ENCODE measurements at regions of chr6 and their contacts with region 1.

Region 1: DNA sequence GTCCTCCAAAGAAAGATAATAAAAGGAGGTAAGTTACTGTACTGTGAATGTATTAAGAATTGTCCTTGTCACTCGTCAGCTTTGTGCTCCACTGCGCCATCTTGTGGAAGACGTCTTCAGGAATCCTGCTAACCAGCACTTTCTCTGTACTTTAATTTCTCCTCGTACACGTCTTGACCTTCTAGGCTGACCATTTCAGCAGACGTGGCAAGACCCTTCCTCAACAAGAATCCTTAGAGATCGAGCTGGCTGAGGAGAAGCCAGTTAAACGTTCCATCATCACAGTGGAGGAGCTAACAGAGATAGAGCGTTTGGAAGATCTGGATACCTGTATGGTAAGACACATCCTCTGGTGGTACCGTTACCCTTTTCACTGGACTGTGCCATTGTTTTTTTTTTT is 95.5 kb upstream of the SCGN start:
- DNase-seq: peak; percentile 50 to 86 (median 60)
- ATAC-seq: peak; percentile 93
- H3K4me3 ChIP-seq: no peak overlapping the region
- H3K27ac ChIP-seq: no peak overlapping the region
- H3K4me1 ChIP-seq: no peaks in the 10 kb centered on the region
- H3K27me3 ChIP-seq: no peaks in the 10 kb centered on the region; a peak in 2 of 5 replicates
- CTCF ChIP-seq: peak; percentile 73 to 91 (median 86)
- EP300 ChIP-seq: no peak
- POLR2A ChIP-seq: no peak
- RAD21 ChIP-seq: peak; percentile 59 to 81

Region 2: GRCh38 chr6:25006565-25007001 is 549.9 kb before region 1 on chr6:
- CTCF ChIA-PET with region 1: no interaction called
- POLR2A ChIA-PET with region 1: no interaction called
- in situ Hi-C with region 1: no loop called
- intact Hi-C with region 1: no loop called
- DNase-seq: peak in 1 of 4 experiments; percentile 16
- ATAC-seq: peak; percentile 21; the same call in 1 of the 3 replicates
- H3K4me3 ChIP-seq: no peak overlapping the region
- H3K27ac ChIP-seq: no peak overlapping the region
- H3K4me1 ChIP-seq: no peaks in the 10 kb centered on the region; a peak in 1 of 5 replicates
- H3K27me3 ChIP-seq: peaks cover 2 to 9% of the 10 kb centered on the region in 2 experiments
- CTCF ChIP-seq: no peak
- EP300 ChIP-seq: no peak
- POLR2A ChIP-seq: no peak
- RAD21 ChIP-seq: no peak

Region 3: GRCh38 chr6:25223490-25223991 is 333.0 kb before region 1 on chr6:
- CTCF ChIA-PET with region 1: interaction called, 4 read pairs
- POLR2A ChIA-PET with region 1: no interaction called
- in situ Hi-C with region 1: no loop called
- intact Hi-C with region 1: loop called (anchors 1 kb)
- DNase-seq: peak; percentile 57 to 73 (median 59)
- ATAC-seq: peak; percentile 87
- H3K4me3 ChIP-seq: no peak overlapping the region
- H3K27ac ChIP-seq: no peak overlapping the region
- H3K4me1 ChIP-seq: peaks cover 0 to under 1% of the 10 kb centered on the region in 2 experiments; a peak in 1 of 5 replicates
- H3K27me3 ChIP-seq: peaks cover 0 to 5% of the 10 kb centered on the region in 2 experiments; a peak in 2 of 5 replicates
- CTCF ChIP-seq: peak; percentile 82 to 92 (median 84)
- EP300 ChIP-seq: no peak
- POLR2A ChIP-seq: no peak
- RAD21 ChIP-seq: peak; percentile 80 to 87

Region 4: GRCh38 chr6:25278914-25279747 is 277.4 kb before region 1 on chr6 and contains the start of gene CARMIL1:
- CTCF ChIA-PET with region 1: interaction called, 6 read pairs
- POLR2A ChIA-PET with region 1: no interaction called
- in situ Hi-C with region 1: no loop called
- intact Hi-C with region 1: loop called (anchors 1 kb)
- DNase-seq: peak; percentile 80 to 92 (median 90)
- ATAC-seq: peak; percentile 97
- H3K4me3 ChIP-seq: peak within 1 kb of the TSS; percentile 60
- H3K27ac ChIP-seq: no peak within 1 kb of the TSS
- H3K4me1 ChIP-seq: peaks cover 2 to 17% of the 10 kb centered on the region in 2 experiments; a peak in 2 of 5 replicates
- H3K27me3 ChIP-seq: peaks cover 4 to 26% of the 10 kb centered on the region in 2 experiments; a peak in 4 of 5 replicates
- CTCF ChIP-seq: peak; percentile 70 to 85 (median 70)
- EP300 ChIP-seq: no peak
- POLR2A ChIP-seq: no peak
- RAD21 ChIP-seq: peak; percentile 78
- polyA plus RNA-seq, gene CARMIL1: 0.08 TPM in 1 of 2 experiments, not detected in the other

Region 5: GRCh38 chr6:25458485-25458884 is 98.0 kb before region 1 on chr6:
- CTCF ChIA-PET with region 1: no interaction called
- POLR2A ChIA-PET with region 1: no interaction called
- in situ Hi-C with region 1: no loop called
- intact Hi-C with region 1: no loop called
- DNase-seq: peak in 1 of 4 experiments; percentile 12
- ATAC-seq: no peak
- H3K4me3 ChIP-seq: no peak overlapping the region
- H3K27ac ChIP-seq: no peak overlapping the region
- H3K4me1 ChIP-seq: no peaks in the 10 kb centered on the region
- H3K27me3 ChIP-seq: no peaks in the 10 kb centered on the region; a peak in 1 of 5 replicates
- CTCF ChIP-seq: no peak
- EP300 ChIP-seq: no peak
- POLR2A ChIP-seq: no peak
- RAD21 ChIP-seq: no peak

Region 6: GRCh38 chr6:25490018-25490801 is 66.3 kb before region 1 on chr6:
- CTCF ChIA-PET with region 1: no interaction called
- POLR2A ChIA-PET with region 1: no interaction called
- in situ Hi-C with region 1: no loop called
- intact Hi-C with region 1: loop called (anchors 5 kb)
- DNase-seq: peak; percentile 39 to 82 (median 55)
- ATAC-seq: peak; percentile 98
- H3K4me3 ChIP-seq: no peak overlapping the region
- H3K27ac ChIP-seq: no peak overlapping the region
- H3K4me1 ChIP-seq: no peaks in the 10 kb centered on the region
- H3K27me3 ChIP-seq: no peaks in the 10 kb centered on the region; a peak in 1 of 5 replicates
- CTCF ChIP-seq: peak; percentile 77 to 89 (median 87)
- EP300 ChIP-seq: no peak
- POLR2A ChIP-seq: no peak
- RAD21 ChIP-seq: peak; percentile 61 to 78

Region 7: GRCh38 chr6:25942561-25943147 is 386.1 kb after region 1 on chr6:
- CTCF ChIA-PET with region 1: interaction called, 3 read pairs
- POLR2A ChIA-PET with region 1: no interaction called
- in situ Hi-C with region 1: no loop called
- intact Hi-C with region 1: loop called (anchors 5 kb)
- DNase-seq: peak in 2 of 4 experiments; percentile 33 to 58
- ATAC-seq: peak; percentile 95
- H3K4me3 ChIP-seq: no peak overlapping the region
- H3K27ac ChIP-seq: no peak overlapping the region
- H3K4me1 ChIP-seq: no peaks in the 10 kb centered on the region
- H3K27me3 ChIP-seq: no peaks in the 10 kb centered on the region; a peak in 1 of 5 replicates
- CTCF ChIP-seq: peak; percentile 63 to 91 (median 64); a peak in 5 of 6 replicates
- EP300 ChIP-seq: no peak
- POLR2A ChIP-seq: no peak
- RAD21 ChIP-seq: peak; percentile 97 to 99